Activated CD8-positive, alpha-beta T cell treated with anti-CD3 and anti-CD28 coated beads, Interleukin-2, amount 10 ng/mL, durations not matched to agents 7 days and 5 days (primary cell): ENCODE measurements at regions of chr9 and their contacts with region 1.

Region 1: DNA sequence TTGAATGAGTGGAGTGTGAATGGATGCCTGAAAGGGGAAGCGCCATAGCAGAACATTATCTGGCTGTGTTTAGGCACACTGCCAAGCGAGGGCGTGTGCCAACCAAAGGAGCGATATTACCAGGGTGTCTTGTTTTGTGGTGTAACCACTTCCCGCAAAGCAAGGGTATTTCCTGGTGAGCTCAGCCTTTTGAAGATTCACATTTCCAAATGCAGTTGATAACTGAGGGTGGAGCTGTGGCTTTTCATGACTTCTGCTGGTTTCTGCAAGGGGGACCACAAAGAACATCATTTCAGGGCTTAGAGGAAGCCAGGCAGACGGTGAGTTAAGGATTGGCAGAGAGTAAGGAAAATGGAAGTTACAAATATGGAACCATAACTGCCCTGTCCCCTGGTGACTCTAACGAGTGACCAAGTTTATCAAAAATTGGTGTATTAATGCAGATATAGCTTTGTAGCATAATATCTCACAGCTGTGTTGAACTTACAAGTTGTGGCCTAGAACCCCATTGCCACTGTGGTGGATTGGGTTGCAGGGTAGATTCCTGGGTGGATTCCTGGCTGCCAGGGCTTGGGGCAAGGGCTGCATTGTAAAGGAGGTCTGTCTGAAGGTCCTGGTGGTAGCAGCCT is 71.4 kb downstream of the RALGPS1 start:
- DNase-seq: peak; percentile 92
- ATAC-seq: peak; percentile 79
- H3K4me3 Mint-ChIP-seq: peak overlapping the region; percentile 47
- H3K27ac Mint-ChIP-seq: peak overlapping the region; percentile 78
- H3K4me1 Mint-ChIP-seq: peaks cover 51% of the 10 kb centered on the region
- H3K27me3 Mint-ChIP-seq: peaks cover 48% of the 10 kb centered on the region

Region 2: GRCh38 chr9:126965541-126966428 is 20.2 kb before region 1 on chr9:
- CTCF ChIA-PET with region 1: interaction called, 19 read pairs
- POLR2A ChIA-PET with region 1: interaction called, 3 read pairs
- DNase-seq: peak; percentile 65
- ATAC-seq: peak; percentile 67
- H3K4me3 Mint-ChIP-seq: no peak overlapping the region
- H3K27ac Mint-ChIP-seq: no peak overlapping the region
- H3K4me1 Mint-ChIP-seq: peaks cover 4% of the 10 kb centered on the region
- H3K27me3 Mint-ChIP-seq: peaks cover 11% of the 10 kb centered on the region

Region 3: DNA sequence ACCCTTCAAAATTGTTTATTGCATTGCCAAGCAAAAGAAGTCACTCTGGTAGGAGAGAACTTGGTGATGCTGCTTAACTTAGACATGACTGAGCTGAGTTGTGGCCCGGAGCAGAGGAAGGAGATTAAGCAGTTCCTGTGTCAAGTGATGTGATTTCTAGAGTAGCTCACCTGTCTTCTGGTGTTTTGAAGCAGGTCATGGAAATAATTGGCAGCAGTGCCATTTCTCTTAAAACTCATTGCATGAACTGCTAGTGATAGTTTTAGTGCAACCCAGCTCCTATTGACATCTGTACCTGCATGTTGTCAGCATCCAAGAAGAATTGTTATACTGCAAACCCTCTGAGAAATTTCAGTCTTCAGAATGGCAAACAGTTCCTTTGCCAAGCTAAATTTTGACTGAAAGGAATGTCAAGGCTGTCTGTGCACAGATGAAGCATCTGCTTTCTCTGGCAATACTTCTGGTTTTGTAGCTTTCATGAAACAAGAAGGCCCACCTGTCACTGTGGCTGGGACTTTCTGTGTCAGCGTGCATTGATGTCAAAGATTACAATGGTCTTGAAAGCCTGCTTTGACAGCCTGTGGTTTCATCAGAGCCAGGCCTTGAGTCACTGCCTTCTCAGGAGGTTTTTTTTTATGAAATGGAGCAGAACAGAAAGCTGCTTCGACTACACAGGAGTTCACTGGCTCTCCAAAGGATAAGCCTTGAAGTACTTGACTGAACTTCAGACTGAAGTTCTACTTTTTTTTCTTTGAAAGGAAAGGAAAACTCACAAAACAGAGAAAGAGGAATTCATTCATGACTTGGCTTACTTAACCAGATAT is 19.2 kb after region 1 on chr9:
- CTCF ChIA-PET with region 1: interaction called, 29 read pairs
- POLR2A ChIA-PET with region 1: interaction called, 21 read pairs
- DNase-seq: peak; percentile 83
- ATAC-seq: peak; percentile 98
- H3K4me3 Mint-ChIP-seq: peak overlapping the region; percentile 30
- H3K27ac Mint-ChIP-seq: peak overlapping the region; percentile 76
- H3K4me1 Mint-ChIP-seq: peaks cover 30% of the 10 kb centered on the region
- H3K27me3 Mint-ChIP-seq: peaks cover 4% of the 10 kb centered on the region

Region 4: DNA sequence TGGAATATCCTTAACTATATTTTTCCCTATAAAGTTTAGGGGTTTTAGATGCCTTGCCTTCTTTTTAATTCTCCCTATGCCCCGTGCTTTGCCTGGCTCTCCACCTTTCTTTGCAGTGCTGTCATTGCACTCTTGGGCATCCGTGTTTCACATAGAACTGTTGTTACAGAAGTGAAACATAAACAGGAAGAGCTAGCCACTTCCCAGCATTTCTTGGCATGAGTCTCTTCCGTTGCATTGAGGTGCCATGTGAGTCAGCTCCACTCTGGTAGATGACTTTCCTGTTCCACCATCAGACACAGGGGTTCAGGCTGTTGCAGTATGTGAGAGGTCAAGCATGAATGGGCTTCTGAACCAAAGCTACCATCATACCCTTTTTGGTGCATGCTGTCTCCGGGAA is 63.1 kb after region 1 on chr9:
- CTCF ChIA-PET with region 1: interaction called, 11 read pairs
- POLR2A ChIA-PET with region 1: no interaction called
- DNase-seq: peak; percentile 48
- ATAC-seq: peak; percentile 73
- H3K4me3 Mint-ChIP-seq: peak overlapping the region; percentile 13
- H3K27ac Mint-ChIP-seq: peak overlapping the region; percentile 51
- H3K4me1 Mint-ChIP-seq: peaks cover 33% of the 10 kb centered on the region
- H3K27me3 Mint-ChIP-seq: peaks cover 7% of the 10 kb centered on the region

Region 5: DNA sequence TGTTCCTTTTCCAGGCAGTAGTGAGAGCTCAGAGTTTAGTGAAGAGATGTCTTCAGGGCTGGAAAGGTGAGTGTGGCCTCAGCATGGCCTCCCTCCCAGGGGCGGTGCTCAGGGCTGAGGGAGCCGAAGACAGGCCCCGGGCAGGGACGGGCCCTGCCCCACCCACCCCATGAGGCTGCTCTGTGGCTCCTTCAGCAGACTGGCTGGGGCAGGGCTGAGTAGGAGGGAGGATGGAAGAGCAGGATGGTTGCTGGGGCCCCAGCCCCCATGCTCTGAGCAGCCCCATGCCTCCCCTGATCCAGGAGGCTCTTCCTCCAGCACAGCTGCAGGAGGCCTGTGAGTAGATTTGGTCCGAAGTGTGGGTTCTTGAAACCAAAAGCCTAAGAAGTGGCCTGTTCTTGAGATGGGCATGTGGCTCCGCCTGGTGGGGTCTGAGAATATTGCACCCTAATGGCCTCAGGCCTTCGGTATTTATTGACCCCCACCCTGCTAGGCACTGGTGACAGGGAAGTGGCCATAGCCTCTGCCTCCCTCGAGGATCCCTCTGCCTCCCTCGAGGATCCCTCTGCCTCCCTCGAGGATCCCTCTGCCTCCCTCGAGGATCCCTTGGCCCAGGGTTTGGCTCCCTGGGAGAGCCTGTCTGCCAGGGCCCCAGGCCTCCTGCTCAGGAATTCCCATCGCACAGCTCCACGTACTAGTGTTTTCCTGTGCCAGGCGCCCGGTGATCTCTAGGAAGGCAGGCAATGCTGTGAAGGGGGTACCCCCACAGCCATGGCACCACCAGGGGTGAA is 213.2 kb after region 1 on chr9:
- CTCF ChIA-PET with region 1: interaction called, 13 read pairs
- POLR2A ChIA-PET with region 1: no interaction called
- DNase-seq: peak; percentile 84
- ATAC-seq: peak; percentile 77
- H3K4me3 Mint-ChIP-seq: no peak overlapping the region
- H3K27ac Mint-ChIP-seq: no peak overlapping the region
- H3K4me1 Mint-ChIP-seq: peaks cover 7% of the 10 kb centered on the region
- H3K27me3 Mint-ChIP-seq: peaks cover 2% of the 10 kb centered on the region